Uterus (tissue), 4 donors: ENCODE measurements at regions of chr22 and their contacts with region 1.

Region 1: DNA sequence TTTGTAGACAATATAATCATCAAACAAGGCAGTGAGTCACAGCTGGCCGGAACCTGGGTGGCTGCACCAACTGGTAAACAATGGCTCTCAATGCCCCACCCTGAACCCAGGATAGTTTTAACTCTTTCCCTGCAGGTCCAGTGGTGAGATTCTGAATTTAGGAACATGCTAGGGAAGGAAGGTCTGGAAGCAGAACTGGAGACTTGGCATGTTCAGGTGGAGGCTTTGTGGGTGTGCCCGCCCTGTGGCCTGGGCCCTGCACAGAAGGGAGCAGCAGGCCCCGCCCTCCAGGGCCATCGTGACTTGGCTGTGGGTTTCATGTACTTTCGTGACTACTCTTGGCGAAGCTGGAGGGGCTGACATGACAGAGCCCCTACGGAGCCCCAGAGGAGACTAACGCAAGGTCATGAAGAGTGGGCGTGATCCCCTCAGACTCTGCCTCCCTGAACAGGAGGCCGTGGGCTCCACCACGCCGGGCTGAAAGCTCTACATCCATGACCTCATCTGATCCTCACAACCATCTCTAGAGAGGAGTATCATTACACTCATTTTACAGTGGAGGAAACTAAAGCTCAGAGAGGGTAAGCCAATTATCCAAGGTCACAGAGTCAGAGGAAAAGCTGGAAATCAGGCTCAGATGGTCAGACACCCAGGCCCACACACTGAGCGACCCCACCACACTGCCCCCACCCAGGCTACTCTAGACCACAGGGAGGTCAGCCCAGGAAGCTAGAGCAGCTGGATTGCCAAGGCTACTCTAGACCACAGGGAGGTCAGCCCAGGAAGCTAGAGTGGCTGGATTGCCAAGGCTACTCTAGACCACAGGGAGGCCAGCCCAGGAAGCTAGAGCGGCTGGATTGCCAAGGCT is 27.3 kb downstream of the MAFF start:
- DNase-seq: no peak
- H3K4me3 ChIP-seq: no peak overlapping the region
- H3K27ac ChIP-seq: peak overlapping the region; percentile 68 to 81
- H3K4me1 ChIP-seq: no peaks in the 10 kb centered on the region
- H3K27me3 ChIP-seq: no peaks in the 10 kb centered on the region
- CTCF ChIP-seq: no peak
- POLR2A ChIP-seq: no peak

Region 2: DNA sequence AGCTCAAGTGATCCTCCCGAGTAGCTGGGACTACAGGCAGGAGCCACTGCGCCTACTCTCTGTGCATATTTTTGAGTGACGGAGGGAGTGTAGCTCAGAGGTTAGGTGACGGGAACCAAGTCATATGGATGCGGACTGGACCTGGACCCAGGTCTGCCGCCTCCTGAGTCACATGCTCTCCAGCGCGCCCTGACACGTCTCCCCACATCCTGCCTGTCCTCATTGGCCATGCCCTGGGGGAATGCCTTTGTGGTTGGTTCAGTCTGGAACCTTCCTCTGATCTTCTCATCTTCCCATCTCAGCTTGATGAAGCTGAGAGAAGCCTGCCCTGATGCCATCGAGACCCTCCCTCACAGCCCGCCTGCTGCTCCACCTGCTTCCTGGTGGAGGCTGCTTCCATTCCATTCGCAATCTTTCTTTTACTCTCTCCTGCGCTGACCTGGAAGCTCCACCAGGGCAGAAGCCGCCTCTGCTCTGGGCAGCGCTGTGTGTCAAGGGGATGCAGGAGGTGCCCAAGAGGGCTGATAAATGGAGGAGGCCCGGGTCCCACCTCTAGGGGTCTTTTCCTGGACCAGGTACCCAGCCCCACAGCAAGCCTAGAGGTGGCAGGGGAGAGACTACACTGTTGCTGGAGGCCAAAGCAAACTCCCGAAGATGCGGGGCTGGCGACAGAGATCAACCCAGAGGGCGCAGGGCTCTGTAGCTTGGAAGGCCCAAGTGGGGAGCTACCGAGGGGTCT is 104.7 kb before region 1 on chr22:
- intact Hi-C with region 1: loop called (anchors 10 kb)
- DNase-seq: no peak
- H3K4me3 ChIP-seq: no peak overlapping the region
- H3K27ac ChIP-seq: no peak overlapping the region
- H3K4me1 ChIP-seq: no peaks in the 10 kb centered on the region
- H3K27me3 ChIP-seq: no peaks in the 10 kb centered on the region
- CTCF ChIP-seq: no peak
- POLR2A ChIP-seq: no peak